Gastrocnemius medialis (tissue), 4 donors: ENCODE measurements at regions of chr6 and their contacts with region 1.

Region 1: GRCh38 chr6:163180874-163181541 is 233.5 kb upstream of the QKI start:
- DNase-seq: peak; percentile 64 to 87
- ATAC-seq: peak; percentile 89 to 96
- H3K4me3 ChIP-seq: peak overlapping the region; percentile 17 to 54 (median 42)
- H3K27ac ChIP-seq: peak overlapping the region; percentile 50 to 69 (median 63)
- H3K4me1 ChIP-seq: peaks cover 17 to 31% of the 10 kb centered on the region in 2 donors
- H3K27me3 ChIP-seq: no peaks in the 10 kb centered on the region
- CTCF ChIP-seq: peak; percentile 81 to 97 (median 87)
- POLR2A ChIP-seq: no peak

Region 2: DNA sequence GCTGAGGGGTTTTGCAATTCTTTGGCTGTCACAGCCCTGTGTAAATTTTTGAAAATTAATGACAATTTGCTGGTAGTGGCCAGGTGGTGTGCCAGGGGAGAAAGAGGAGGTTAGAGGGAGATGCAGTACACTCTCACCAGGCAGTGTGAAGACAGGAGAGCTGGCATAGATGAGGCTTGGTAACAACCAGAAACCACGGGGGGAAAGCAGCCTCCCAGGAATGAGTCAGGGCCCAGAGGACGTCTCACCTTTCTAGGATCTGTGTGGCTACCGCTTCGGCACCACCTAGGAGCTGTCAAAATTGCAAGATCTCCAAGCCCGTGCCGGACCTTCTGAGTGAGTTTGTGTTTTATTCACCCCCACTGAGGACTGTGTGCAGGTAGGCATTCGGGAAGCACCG is 281.9 kb before region 1 on chr6:
- in situ Hi-C with region 1: no loop called
- intact Hi-C with region 1: no loop called
- DNase-seq: no peak
- ATAC-seq: peak; percentile 41 to 47
- H3K4me3 ChIP-seq: no peak overlapping the region
- H3K27ac ChIP-seq: no peak overlapping the region
- H3K4me1 ChIP-seq: no peaks in the 10 kb centered on the region
- H3K27me3 ChIP-seq: no peaks in the 10 kb centered on the region
- CTCF ChIP-seq: no peak
- POLR2A ChIP-seq: no peak

Region 3: DNA sequence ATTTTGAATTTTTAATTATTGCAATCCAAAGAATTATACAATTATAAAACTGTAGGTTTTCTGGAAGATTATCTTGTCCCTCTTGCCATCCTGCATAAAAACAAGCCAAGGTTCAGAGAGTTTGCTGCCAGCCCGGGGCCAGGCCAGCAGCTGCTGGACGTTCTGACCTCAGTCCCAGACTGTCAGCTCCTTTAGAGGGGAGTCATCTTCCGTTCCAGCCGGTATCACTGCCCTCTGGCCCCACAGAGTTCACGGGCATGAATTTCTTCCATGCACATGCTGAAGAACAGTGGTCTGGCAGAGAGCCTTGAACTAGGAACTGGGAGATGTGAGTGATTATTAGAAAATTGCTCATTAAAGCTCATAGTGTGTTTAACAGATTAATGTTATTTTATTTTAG is 103.1 kb after region 1 on chr6:
- in situ Hi-C with region 1: no loop called
- intact Hi-C with region 1: loop called (anchors 10 kb)
- DNase-seq: no peak
- ATAC-seq: no peak
- H3K4me3 ChIP-seq: no peak overlapping the region
- H3K27ac ChIP-seq: no peak overlapping the region
- H3K4me1 ChIP-seq: peaks cover 0 to 4% of the 10 kb centered on the region in 2 donors
- H3K27me3 ChIP-seq: no peaks in the 10 kb centered on the region
- CTCF ChIP-seq: no peak
- POLR2A ChIP-seq: no peak

Region 4: GRCh38 chr6:163405412-163406309 is 224.7 kb after region 1 on chr6:
- in situ Hi-C with region 1: loop called (anchors 5 to 10 kb)
- intact Hi-C with region 1: no loop called
- DNase-seq: peak; percentile 68 to 86
- ATAC-seq: peak; percentile 83 to 90
- H3K4me3 ChIP-seq: peak overlapping the region; percentile 45 to 55 (median 50)
- H3K27ac ChIP-seq: peak overlapping the region; percentile 85 to 92 (median 88)
- H3K4me1 ChIP-seq: peaks cover 23 to 27% of the 10 kb centered on the region in 2 donors
- H3K27me3 ChIP-seq: no peaks in the 10 kb centered on the region
- CTCF ChIP-seq: no peak
- POLR2A ChIP-seq: peak; percentile 26 to 37

Region 5: DNA sequence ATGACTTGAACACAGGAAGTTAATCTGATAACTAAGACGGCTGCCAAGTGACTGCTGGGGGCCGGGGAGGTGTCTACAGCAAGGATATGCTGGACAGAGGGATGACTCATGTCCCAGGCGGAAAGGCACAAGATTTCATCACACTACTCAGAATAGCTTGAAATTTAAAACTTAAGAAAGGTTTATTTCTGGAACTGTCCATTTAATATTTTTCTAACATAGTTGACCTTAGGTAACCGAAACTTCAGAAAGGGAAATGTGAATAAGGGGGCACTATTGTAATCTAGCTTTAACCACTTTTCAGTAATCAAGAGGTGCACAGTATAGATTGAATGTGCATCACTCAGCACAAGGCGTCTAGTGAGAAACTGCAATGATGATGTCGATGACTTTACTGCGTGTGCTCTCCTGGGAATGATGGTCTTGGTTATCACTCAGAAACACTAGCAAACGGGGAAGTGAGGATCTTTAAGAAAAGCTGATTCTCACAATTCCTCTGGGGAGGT is 405.0 kb after region 1 on chr6:
- in situ Hi-C with region 1: no loop called
- intact Hi-C with region 1: loop called (anchors 10 kb)
- DNase-seq: peak; percentile 87 to 93
- ATAC-seq: peak; percentile 85 to 88
- H3K4me3 ChIP-seq: peak overlapping the region in 3 of 4 donors; percentile 14 to 24 (median 24)
- H3K27ac ChIP-seq: peak overlapping the region; percentile 81 to 88 (median 86)
- H3K4me1 ChIP-seq: peaks cover 43 to 55% of the 10 kb centered on the region in 2 donors
- H3K27me3 ChIP-seq: no peaks in the 10 kb centered on the region
- CTCF ChIP-seq: no peak
- POLR2A ChIP-seq: peak; percentile 39 to 52

Region 6: GRCh38 chr6:163965426-163966348 is 784.7 kb after region 1 on chr6:
- in situ Hi-C with region 1: loop called in 1 of 4 experiments (anchors 10 kb)
- intact Hi-C with region 1: no loop called
- DNase-seq: peak; percentile 75 to 79
- ATAC-seq: peak; percentile 24 to 51
- H3K4me3 ChIP-seq: peak overlapping the region in 2 of 4 donors; percentile 1
- H3K27ac ChIP-seq: peak overlapping the region; percentile 81 to 99 (median 92)
- H3K4me1 ChIP-seq: peaks cover 49 to 50% of the 10 kb centered on the region in 2 donors
- H3K27me3 ChIP-seq: no peaks in the 10 kb centered on the region
- CTCF ChIP-seq: no peak
- POLR2A ChIP-seq: peak in 1 of 2 donors; percentile 7